Activated naive CD4-positive, alpha-beta T cell treated with anti-CD3 and anti-CD28 coated beads for 36 hours (primary cell): ENCODE measurements at regions of chr1 and their contacts with region 1.

Region 1: GRCh38 chr1:39098546-39099250 is 72.5 kb downstream of the NDUFS5 start:
- DNase-seq: peak; percentile 73
- H3K4me3 Mint-ChIP-seq: no peak overlapping the region
- H3K27ac Mint-ChIP-seq: no peak overlapping the region
- H3K4me1 Mint-ChIP-seq: peaks cover 21% of the 10 kb centered on the region
- H3K27me3 Mint-ChIP-seq: no peaks in the 10 kb centered on the region

Region 2: DNA sequence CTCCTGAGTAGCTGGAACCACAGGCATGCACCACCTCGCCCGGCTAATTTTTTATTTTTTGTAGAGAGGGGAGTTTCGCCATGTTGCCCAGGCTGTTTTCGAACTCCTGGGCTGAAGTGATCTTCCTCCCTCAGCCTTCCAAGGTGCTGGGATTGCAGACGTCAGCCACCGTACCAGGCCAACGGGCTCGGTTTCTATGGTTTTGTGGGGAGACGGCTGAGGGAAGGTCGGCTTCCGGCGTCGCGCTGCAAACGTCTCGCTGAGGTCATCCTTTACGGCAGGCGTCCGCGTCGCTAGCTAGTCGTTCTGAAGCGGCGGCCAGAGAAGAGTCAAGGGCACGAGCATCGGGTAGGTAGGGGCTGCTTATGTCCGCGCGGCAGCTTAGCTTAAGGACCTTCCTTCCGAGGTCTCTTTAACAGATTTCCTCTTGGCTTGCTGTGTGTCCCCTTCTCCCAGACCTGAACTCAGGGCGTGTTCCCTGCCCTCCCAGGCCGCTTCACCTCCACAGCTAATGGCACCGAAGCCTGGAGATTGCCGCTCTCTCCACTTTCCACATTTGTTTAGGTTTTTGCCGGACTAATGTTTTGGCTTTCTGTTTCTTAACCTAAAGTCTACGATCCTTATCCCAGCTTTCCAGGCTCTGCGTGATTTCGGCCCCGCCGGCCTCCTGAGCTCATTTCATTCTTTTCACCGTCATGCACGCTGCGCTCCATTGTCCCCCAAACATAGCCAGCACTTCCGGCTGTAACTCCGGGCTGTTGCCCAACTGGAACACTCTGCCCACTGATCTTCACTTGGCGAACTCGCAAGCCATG is 72.4 kb before region 1 on chr1 and contains the start of gene NDUFS5:
- CTCF ChIA-PET with region 1: interaction called, 4 read pairs
- intact Hi-C with region 1: loop called (anchors 10 kb)
- DNase-seq: peak; percentile 92
- H3K4me3 Mint-ChIP-seq: peak within 1 kb of the TSS; percentile 98
- H3K27ac Mint-ChIP-seq: peak within 1 kb of the TSS; percentile 98
- H3K4me1 Mint-ChIP-seq: peaks cover 32% of the 10 kb centered on the region
- H3K27me3 Mint-ChIP-seq: no peaks in the 10 kb centered on the region
- total RNA-seq, gene NDUFS5: 226 TPM

Region 3: GRCh38 chr1:39189592-39190041 is 90.9 kb after region 1 on chr1:
- CTCF ChIA-PET with region 1: interaction called, 36 read pairs
- intact Hi-C with region 1: loop called (anchors 1 kb)
- DNase-seq: no peak
- H3K4me3 Mint-ChIP-seq: no peak overlapping the region
- H3K27ac Mint-ChIP-seq: no peak overlapping the region
- H3K4me1 Mint-ChIP-seq: peaks cover 86% of the 10 kb centered on the region
- H3K27me3 Mint-ChIP-seq: no peaks in the 10 kb centered on the region

Region 4: DNA sequence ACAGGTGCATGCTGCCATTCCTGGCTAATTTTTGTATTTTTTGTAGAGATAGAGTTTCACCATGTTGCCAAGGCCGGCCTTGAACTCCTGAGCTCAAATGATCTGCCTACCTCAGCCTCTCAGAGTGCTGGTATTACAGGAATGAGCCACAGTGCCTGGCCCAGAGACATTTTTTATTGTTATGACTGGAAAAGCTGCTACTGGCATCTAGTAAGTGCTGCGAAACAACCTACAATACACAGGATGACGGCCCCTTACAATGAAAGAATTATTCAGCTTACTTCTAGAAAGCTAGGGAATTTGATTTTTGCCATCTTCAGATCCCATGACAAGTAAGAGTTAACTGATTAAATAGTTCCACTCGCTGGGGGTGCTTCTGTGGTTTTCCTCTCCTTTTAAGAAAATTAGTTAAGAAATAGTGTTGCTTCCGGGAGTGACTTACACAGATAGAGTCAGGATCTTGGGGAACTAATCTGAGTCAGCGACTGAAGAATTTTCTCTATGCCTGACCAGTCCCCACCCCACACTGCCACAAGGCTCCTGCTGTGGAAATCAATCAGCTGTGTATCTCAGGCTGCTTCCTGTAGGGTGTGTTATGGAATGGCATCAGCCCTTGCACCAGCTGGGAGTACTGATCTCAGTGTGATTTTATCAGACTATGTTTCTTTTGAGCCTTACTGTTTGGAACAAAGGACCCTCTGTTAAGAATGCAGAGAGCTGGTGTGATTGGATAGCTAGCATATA is 299.8 kb after region 1 on chr1:
- CTCF ChIA-PET with region 1: interaction called, 5 read pairs
- intact Hi-C with region 1: loop called (anchors 5 kb)
- DNase-seq: peak; percentile 58
- H3K4me3 Mint-ChIP-seq: no peak overlapping the region
- H3K27ac Mint-ChIP-seq: peak overlapping the region; percentile 68
- H3K4me1 Mint-ChIP-seq: peaks cover 63% of the 10 kb centered on the region
- H3K27me3 Mint-ChIP-seq: no peaks in the 10 kb centered on the region

Region 5: GRCh38 chr1:39538588-39539465 is 440.1 kb after region 1 on chr1:
- CTCF ChIA-PET with region 1: interaction called, 26 read pairs
- intact Hi-C with region 1: loop called (anchors 1 kb)
- DNase-seq: peak; percentile 63
- H3K4me3 Mint-ChIP-seq: no peak overlapping the region
- H3K27ac Mint-ChIP-seq: no peak overlapping the region
- H3K4me1 Mint-ChIP-seq: no peaks in the 10 kb centered on the region
- H3K27me3 Mint-ChIP-seq: no peaks in the 10 kb centered on the region

Region 6: GRCh38 chr1:39720094-39720999 is 621.6 kb after region 1 on chr1:
- CTCF ChIA-PET with region 1: interaction called, 3 read pairs
- intact Hi-C with region 1: loop called (anchors 10 kb)
- DNase-seq: no peak
- H3K4me3 Mint-ChIP-seq: no peak overlapping the region
- H3K27ac Mint-ChIP-seq: no peak overlapping the region
- H3K4me1 Mint-ChIP-seq: no peaks in the 10 kb centered on the region
- H3K27me3 Mint-ChIP-seq: peaks cover 36% of the 10 kb centered on the region